CD14-positive monocyte (primary cell): ENCODE measurements at regions of chr16 and their contacts with region 1.

Region 1: DNA sequence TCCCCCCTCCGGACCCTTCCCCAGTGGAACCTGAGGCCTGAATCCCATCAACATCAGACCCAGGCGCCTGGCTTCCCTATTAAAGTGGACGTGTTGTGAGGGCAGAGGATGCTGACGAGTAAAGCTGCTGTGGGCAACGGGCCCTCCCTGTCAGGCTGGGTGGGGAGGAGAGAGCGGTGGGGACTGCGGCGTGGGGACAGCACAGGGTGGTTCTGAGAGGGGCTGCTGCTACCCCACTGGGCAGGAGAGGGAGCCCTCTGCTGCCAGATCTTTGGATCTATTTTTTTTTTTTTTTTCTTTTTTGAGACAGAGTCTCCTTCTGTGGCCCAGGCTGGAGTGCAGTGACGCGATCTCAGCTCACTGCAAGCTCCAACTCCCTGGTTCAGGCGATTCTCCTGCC is 5.9 kb downstream of the CA5A start:
- DNase-seq: no peak
- H3K4me3 ChIP-seq: no peak overlapping the region
- H3K4me3 Mint-ChIP-seq: no peak overlapping the region
- H3K27ac ChIP-seq: no peak overlapping the region
- H3K27ac Mint-ChIP-seq: no peak overlapping the region
- H3K4me1 ChIP-seq: peaks cover 0 to 2% of the 10 kb centered on the region in 2 donors
- H3K4me1 Mint-ChIP-seq: peaks cover 10% of the 10 kb centered on the region
- H3K27me3 ChIP-seq: peaks cover 0 to 5% of the 10 kb centered on the region in 2 donors
- H3K27me3 Mint-ChIP-seq: peaks cover 15 to 25% (median 21%) of the 10 kb centered on the region in 3 donors
- CTCF ChIP-seq: peak; percentile 18

Region 2: GRCh38 chr16:87976665-87977064 is 46.2 kb after region 1 on chr16:
- intact Hi-C with region 1: no loop called
- DNase-seq: no peak
- H3K4me3 ChIP-seq: no peak overlapping the region
- H3K4me3 Mint-ChIP-seq: no peak overlapping the region
- H3K27ac ChIP-seq: no peak overlapping the region
- H3K27ac Mint-ChIP-seq: peak overlapping the region in 2 of 7 donors; percentile 58 to 85
- H3K4me1 ChIP-seq: no peaks in the 10 kb centered on the region
- H3K4me1 Mint-ChIP-seq: peaks cover 16% of the 10 kb centered on the region
- H3K27me3 ChIP-seq: no peaks in the 10 kb centered on the region
- H3K27me3 Mint-ChIP-seq: peaks cover 0 to 3% (median 2%) of the 10 kb centered on the region in 3 donors
- CTCF ChIP-seq: no peak

Region 3: DNA sequence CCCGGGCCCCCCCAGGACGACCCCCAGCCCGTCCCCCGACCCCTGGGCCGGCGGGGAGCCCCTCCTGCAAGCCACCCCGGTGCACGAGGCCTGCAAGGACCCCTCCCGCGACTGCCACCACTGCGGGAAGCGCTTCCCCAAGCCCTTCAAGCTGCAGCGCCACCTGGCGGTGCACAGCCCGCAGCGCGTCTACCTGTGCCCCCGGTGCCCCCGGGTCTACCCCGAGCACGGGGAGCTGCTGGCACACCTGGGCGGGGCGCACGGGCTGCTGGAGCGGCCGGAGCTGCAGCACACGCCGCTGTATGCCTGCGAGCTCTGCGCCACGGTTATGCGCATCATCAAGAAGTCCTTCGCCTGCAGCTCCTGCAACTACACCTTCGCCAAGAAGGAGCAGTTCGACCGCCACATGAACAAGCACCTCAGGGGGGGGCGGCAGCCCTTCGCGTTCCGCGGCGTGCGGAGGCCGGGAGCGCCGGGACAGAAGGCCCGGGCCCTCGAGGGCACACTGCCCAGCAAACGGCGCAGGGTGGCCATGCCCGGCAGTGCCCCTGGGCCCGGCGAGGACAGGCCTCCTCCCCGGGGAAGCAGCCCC is 507.0 kb after region 1 on chr16:
- intact Hi-C with region 1: loop called in 1 of 2 experiments (anchors 10 kb)
- DNase-seq: peak in 2 of 3 donors; percentile 39 to 41
- H3K4me3 ChIP-seq: no peak overlapping the region
- H3K4me3 Mint-ChIP-seq: no peak overlapping the region
- H3K27ac ChIP-seq: no peak overlapping the region
- H3K27ac Mint-ChIP-seq: no peak overlapping the region
- H3K4me1 ChIP-seq: peaks cover 0 to 2% of the 10 kb centered on the region in 2 donors
- H3K4me1 Mint-ChIP-seq: no peaks in the 10 kb centered on the region
- H3K27me3 ChIP-seq: peaks cover 0 to 8% of the 10 kb centered on the region in 2 donors
- H3K27me3 Mint-ChIP-seq: peaks cover under 1 to 27% (median 2%) of the 10 kb centered on the region in 3 donors
- CTCF ChIP-seq: peak; percentile 96